HEK293T (cell line): ENCODE measurements at regions of chr6 and their contacts with region 1.

Region 1: DNA sequence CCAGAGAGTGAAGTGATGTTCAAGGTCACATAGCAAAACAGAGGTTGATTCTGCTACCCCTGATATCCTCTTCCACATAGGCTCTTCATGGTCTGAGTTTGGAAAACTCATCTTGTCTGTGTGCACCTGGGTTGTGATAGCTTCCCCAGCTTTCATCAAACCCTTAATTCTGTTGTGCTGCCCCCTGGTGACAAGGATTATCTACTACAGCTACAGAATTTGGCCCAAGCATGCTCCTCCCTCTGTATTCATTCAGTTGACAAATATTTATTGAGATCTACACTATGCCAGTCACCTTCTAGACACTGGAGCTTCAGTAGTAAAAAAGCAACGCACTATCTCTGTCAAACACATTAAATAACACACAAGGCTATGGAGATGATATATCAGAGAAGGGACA is 50.4 kb downstream of the SMPDL3A start:
- DNase-seq: peak; percentile 76

Region 2: DNA sequence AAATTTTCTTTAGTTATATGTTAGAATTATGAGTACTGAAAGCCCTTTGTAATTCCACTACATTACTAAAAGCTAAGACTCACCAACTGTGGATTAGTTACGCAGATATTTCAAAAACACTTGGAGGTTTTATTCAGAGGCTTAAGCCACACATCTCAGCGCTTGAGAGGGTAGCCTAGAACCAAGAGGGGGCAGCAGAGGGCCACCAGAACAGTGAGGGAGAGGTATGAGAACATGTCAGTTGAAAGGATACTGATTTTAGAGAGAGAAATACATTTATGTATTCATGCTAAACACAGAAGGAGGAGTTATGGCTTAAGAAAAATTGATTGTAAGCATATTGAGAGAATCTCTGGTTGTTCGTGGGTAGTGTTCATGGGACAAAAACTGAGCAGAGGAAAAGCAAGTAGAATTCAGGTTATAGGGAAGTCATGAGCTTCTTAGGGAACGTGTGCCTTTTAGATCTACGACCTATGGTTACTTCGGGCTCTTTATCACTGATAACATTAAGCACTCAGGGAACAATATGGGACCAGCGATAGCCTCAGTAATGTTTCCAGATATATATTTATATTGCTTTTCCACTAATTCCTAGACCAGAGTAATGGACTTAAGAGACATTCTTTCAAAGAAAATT is 347.4 kb before region 1 on chr6:
- CTCF ChIA-PET with region 1: interaction called, 15 read pairs
- POLR2A ChIA-PET with region 1: no interaction called
- DNase-seq: peak; percentile 75

Region 3: GRCh38 chr6:122730775-122731386 is 108.6 kb before region 1 on chr6:
- CTCF ChIA-PET with region 1: interaction called, 87 read pairs
- POLR2A ChIA-PET with region 1: no interaction called
- DNase-seq: peak; percentile 44

Region 4: GRCh38 chr6:122749451-122750050 is 89.9 kb before region 1 on chr6:
- CTCF ChIA-PET with region 1: interaction called, 28 read pairs
- POLR2A ChIA-PET with region 1: interaction called, 3 read pairs
- DNase-seq: no peak

Region 5: DNA sequence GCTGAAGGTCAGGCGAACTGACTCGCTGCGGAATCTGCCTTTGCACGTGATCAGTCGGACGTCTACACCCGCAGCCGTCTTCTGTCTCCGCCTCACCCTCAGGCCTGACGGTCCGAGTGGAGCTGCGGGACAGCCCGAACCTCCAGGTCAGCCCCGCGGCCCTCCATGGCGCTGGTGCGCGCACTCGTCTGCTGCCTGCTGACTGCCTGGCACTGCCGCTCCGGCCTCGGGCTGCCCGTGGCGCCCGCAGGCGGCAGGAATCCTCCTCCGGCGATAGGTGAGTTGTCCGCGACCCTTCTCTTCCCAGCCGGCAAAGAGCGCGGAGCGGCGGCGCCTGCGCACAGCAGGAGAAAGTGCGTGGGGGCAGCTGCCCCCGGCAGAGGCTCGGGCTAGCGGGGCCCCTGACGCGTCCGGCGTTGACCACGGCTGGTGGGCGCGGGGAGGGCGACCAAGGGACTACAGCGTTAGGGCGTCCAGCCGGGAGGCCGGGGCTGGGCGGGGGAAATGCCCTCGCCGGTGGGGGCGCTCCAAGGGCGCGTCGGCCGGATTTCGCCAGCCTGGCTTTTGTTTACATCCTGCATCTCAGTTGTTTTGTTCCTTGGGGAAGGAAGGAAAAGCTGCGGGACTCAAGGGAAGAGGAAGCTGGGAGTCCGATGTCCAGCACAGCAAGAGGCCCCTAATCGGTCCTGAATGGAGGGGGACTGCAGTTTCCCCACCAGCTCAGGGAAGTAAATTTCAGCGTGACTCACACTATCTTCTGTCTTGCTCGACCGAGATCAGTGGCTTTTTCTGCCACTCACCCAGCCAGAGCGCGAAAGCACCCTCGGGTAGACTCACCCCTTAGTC is 50.1 kb before region 1 on chr6 and contains the start of gene SMPDL3A:
- CTCF ChIA-PET with region 1: interaction called, 11 read pairs
- POLR2A ChIA-PET with region 1: interaction called, 4 read pairs
- DNase-seq: peak; percentile 73

Region 6: GRCh38 chr6:122994256-122994655 is 154.8 kb after region 1 on chr6:
- CTCF ChIA-PET with region 1: no interaction called
- POLR2A ChIA-PET with region 1: no interaction called
- DNase-seq: no peak